AG04450 (cell line): ENCODE measurements at regions of chr7 and their contacts with region 1.

Region 1: DNA sequence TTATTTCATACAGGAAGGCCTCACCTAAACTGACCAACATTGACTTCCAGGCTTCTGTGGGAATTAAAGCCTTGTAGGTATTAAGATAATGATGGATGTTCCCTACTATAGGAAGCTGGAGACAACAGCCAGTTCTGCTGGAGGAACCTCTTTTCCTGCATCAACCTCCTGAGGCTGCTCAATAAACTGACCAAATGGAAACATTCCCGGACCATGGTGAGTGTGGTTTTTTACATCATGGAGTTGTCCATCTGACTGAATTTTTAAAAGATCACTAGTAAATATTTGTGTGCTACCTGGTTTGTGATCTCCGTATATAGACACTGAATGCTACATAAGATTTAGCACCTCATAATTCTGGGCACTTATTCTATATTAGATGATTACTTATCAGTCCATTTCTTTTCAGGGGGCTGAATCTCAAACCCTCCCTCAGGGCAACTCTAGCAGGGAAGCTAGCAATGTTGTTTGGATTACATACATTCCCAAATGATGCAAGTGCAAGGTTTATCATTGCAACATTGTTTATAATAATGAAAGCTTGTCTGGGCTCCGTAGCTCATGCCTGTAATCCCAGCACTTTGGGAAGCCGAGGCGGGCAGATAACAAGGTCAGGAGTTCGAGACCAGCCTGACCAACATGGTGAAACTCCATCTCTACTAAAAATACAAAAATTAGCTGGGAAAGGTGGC is 21.5 kb upstream of the SMKR1 start:
- DNase-seq: no peak
- H3K4me3 ChIP-seq: no peak overlapping the region
- H3K27ac ChIP-seq: peak overlapping the region; percentile 63
- H3K27me3 ChIP-seq: no peaks in the 10 kb centered on the region
- CTCF ChIP-seq: no peak

Region 2: DNA sequence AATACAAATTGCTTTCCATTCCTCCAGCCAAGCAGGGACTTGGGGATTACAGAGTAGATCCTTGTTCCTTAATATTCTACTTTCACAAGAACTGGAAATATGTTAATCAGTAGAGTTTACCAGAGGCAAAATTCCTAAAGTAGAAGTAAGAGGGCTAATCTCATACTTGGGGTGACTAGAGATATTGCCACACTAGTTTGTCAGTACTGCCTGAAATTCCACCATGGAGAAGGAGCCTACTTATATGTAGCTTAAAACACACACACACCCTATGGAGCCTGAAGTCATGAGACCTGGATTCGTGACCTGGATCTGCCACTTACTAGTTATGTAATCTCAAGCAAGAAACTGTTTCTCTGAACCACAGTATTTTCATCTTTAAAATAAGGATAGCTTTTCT is 12.7 kb before region 1 on chr7:
- CTCF ChIA-PET with region 1: interaction called, 11 read pairs
- POLR2A ChIA-PET with region 1: no interaction called
- DNase-seq: peak; percentile 10
- H3K4me3 ChIP-seq: no peak overlapping the region
- H3K27ac ChIP-seq: no peak overlapping the region
- H3K27me3 ChIP-seq: no peaks in the 10 kb centered on the region
- CTCF ChIP-seq: no peak

Region 3: GRCh38 chr7:129536323-129536722 is 55.5 kb after region 1 on chr7:
- CTCF ChIA-PET with region 1: no interaction called
- POLR2A ChIA-PET with region 1: no interaction called
- DNase-seq: no peak
- H3K4me3 ChIP-seq: no peak overlapping the region
- H3K27ac ChIP-seq: no peak overlapping the region
- H3K27me3 ChIP-seq: no peaks in the 10 kb centered on the region
- CTCF ChIP-seq: no peak